ENCODE measurements at regions of chr5 and their contacts with region 1.

Region 1: GRCh38 chr5:54844905-54845566 is 140.4 kb downstream of the ESM1 start:
- DNase-seq: peak; percentile 76
- ATAC-seq: peak; percentile 54
- H3K4me3 ChIP-seq: peak overlapping the region in 3 of 5 experiments; percentile 26 to 41 (median 28)
- H3K4me3 Mint-ChIP-seq: peak overlapping the region; percentile 85
- H3K27ac ChIP-seq: peak overlapping the region in 1 of 2 donors; percentile 70
- H3K27ac Mint-ChIP-seq: peak overlapping the region; percentile 91
- H3K4me1 ChIP-seq: peaks cover 5 to 10% of the 10 kb centered on the region in 2 donors
- H3K4me1 Mint-ChIP-seq: peaks cover 23% of the 10 kb centered on the region
- H3K27me3 ChIP-seq: no peaks in the 10 kb centered on the region
- H3K27me3 Mint-ChIP-seq: peaks cover 16% of the 10 kb centered on the region
- CTCF ChIP-seq: peak; percentile 78

Region 2: DNA sequence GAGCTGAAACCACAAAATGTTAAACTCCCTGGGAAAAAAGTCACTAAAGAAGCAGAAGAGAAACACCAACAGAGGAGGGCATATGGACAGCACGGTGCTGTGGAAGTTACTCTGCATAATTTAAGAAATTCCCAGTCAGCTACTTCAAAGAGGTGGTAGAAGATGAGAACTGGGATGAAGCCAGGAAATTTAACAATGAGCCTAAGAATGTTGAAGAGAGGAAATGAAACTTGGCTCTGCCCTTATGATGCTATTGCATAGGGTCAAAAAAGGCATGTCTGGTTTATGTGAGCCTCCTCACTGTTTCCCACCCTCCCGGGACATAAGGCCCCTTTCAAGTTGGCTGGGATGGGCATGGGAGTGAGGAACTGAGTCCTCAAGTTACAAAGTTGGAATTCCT is 352.9 kb before region 1 on chr5:
- CTCF ChIA-PET with region 1: interaction called, 19 read pairs
- POLR2A ChIA-PET with region 1: interaction called, 4 read pairs
- intact Hi-C with region 1: no loop called
- DNase-seq: no peak
- ATAC-seq: no peak
- H3K4me3 ChIP-seq: no peak overlapping the region
- H3K4me3 Mint-ChIP-seq: no peak overlapping the region
- H3K27ac ChIP-seq: no peak overlapping the region
- H3K27ac Mint-ChIP-seq: no peak overlapping the region
- H3K4me1 ChIP-seq: no peaks in the 10 kb centered on the region
- H3K4me1 Mint-ChIP-seq: no peaks in the 10 kb centered on the region
- H3K27me3 ChIP-seq: peaks cover 0 to 5% (median 1%) of the 10 kb centered on the region in 4 experiments
- H3K27me3 Mint-ChIP-seq: peaks cover 8% of the 10 kb centered on the region
- CTCF ChIP-seq: no peak

Region 3: DNA sequence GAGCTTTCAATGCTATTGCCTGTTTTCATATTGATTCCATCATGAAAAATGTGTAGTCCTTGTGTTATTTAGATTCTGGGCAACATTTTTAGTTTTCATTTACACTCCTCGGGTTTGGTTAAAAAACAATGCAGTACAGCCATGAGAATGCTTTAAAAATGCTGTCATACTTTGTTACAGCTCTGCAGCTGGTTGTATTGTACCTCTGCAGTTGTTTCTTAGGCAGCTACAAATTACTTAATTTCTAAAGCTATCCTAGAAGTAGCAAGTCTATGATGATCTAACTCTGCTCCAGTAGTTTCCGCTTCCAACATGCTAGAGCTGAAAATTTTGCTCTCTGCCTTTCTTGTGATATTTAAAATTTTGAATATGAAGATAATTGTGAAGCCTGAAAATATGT is 307.3 kb before region 1 on chr5:
- CTCF ChIA-PET with region 1: interaction called, 14 read pairs
- POLR2A ChIA-PET with region 1: no interaction called
- intact Hi-C with region 1: no loop called
- DNase-seq: no peak
- ATAC-seq: no peak
- H3K4me3 ChIP-seq: no peak overlapping the region
- H3K4me3 Mint-ChIP-seq: no peak overlapping the region
- H3K27ac ChIP-seq: peak overlapping the region in 1 of 2 donors; percentile 56
- H3K27ac Mint-ChIP-seq: no peak overlapping the region
- H3K4me1 ChIP-seq: peaks cover 12 to 44% of the 10 kb centered on the region in 2 donors
- H3K4me1 Mint-ChIP-seq: peaks cover 74% of the 10 kb centered on the region
- H3K27me3 ChIP-seq: no peaks in the 10 kb centered on the region
- H3K27me3 Mint-ChIP-seq: no peaks in the 10 kb centered on the region
- CTCF ChIP-seq: no peak

Region 4: DNA sequence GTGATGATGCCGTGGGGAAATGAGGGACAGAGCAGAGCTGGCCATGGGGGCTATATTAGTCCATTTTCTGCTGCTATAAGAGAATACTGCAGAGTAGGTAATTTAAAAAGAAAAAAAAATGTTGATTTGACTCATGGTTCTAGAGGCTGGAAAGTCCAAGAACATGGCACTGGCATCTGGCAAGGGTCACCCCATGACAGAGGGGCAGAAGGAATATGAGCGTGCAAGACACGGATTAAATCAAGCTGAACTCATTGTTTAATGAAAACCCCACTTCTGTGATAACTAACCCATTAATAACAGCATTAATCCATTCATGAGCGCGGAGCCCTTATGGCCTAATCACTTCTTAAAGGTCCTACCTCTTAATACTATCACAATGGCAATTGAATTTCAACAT is 258.7 kb before region 1 on chr5:
- CTCF ChIA-PET with region 1: no interaction called
- POLR2A ChIA-PET with region 1: no interaction called
- intact Hi-C with region 1: no loop called
- DNase-seq: no peak
- ATAC-seq: no peak
- H3K4me3 ChIP-seq: no peak overlapping the region
- H3K4me3 Mint-ChIP-seq: no peak overlapping the region
- H3K27ac ChIP-seq: no peak overlapping the region
- H3K27ac Mint-ChIP-seq: no peak overlapping the region
- H3K4me1 ChIP-seq: peaks cover 8 to 11% of the 10 kb centered on the region in 2 donors
- H3K4me1 Mint-ChIP-seq: peaks cover 18% of the 10 kb centered on the region
- H3K27me3 ChIP-seq: no peaks in the 10 kb centered on the region
- H3K27me3 Mint-ChIP-seq: no peaks in the 10 kb centered on the region
- CTCF ChIP-seq: no peak

Region 5: DNA sequence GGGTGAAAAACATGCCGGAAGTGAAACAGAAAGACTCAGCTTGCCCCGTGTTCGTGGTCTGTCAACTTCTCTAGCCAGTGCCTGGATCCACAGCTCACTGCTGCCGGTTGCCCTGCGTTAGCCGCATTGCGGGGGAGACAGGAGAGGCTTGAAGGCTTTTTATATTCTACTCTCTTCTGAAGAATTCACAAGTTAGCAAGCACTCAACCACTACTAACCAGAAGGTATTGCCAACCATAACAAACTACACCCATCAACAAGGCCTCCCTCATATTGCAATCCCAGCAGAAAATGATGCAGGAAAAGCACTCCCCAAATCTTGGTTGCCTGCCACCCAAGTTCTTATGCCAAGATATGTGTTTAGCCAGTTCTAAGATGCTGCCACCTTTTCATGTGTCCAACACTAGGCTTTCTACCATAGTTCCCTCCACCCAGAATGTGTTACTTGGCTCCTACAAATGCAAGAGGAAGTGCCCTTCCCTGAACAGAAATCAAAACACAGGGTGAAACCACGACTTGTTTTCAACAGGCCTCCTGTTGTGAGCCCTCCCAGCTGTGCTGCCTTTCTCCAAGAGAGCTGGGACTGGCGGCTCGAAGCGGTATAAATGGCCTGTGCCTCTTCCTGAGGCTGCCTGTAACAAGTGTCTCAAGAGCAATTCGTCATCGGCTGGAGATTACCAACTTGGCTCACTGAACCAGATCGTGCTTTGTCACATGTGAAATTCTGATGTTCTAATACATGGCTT is 198.5 kb before region 1 on chr5:
- CTCF ChIA-PET with region 1: interaction called, 23 read pairs
- POLR2A ChIA-PET with region 1: interaction called, 4 read pairs
- intact Hi-C with region 1: loop called (anchors 1 kb)
- DNase-seq: peak; percentile 88
- ATAC-seq: peak; percentile 89
- H3K4me3 ChIP-seq: peak overlapping the region; percentile 7 to 49 (median 41)
- H3K4me3 Mint-ChIP-seq: peak overlapping the region; percentile 79
- H3K27ac ChIP-seq: peak overlapping the region; percentile 87 to 88
- H3K27ac Mint-ChIP-seq: peak overlapping the region; percentile 98
- H3K4me1 ChIP-seq: peaks cover 61 to 67% of the 10 kb centered on the region in 2 donors
- H3K4me1 Mint-ChIP-seq: peaks cover 68% of the 10 kb centered on the region
- H3K27me3 ChIP-seq: no peaks in the 10 kb centered on the region
- H3K27me3 Mint-ChIP-seq: no peaks in the 10 kb centered on the region
- CTCF ChIP-seq: no peak

Region 6: GRCh38 chr5:54753034-54753433 is 92.0 kb before region 1 on chr5:
- CTCF ChIA-PET with region 1: interaction called, 11 read pairs
- POLR2A ChIA-PET with region 1: no interaction called
- intact Hi-C with region 1: no loop called
- DNase-seq: peak; percentile 47
- ATAC-seq: peak; percentile 84
- H3K4me3 ChIP-seq: peak overlapping the region in 4 of 5 experiments; percentile 5 to 54 (median 21)
- H3K4me3 Mint-ChIP-seq: peak overlapping the region; percentile 55
- H3K27ac ChIP-seq: peak overlapping the region; percentile 67 to 75
- H3K27ac Mint-ChIP-seq: peak overlapping the region; percentile 87
- H3K4me1 ChIP-seq: peaks cover 48 to 57% of the 10 kb centered on the region in 2 donors
- H3K4me1 Mint-ChIP-seq: peaks cover 61% of the 10 kb centered on the region
- H3K27me3 ChIP-seq: no peaks in the 10 kb centered on the region
- H3K27me3 Mint-ChIP-seq: no peaks in the 10 kb centered on the region
- CTCF ChIP-seq: no peak

Region 7: GRCh38 chr5:54820346-54821134 is 24.5 kb before region 1 on chr5:
- CTCF ChIA-PET with region 1: no interaction called
- POLR2A ChIA-PET with region 1: no interaction called
- intact Hi-C with region 1: no loop called
- DNase-seq: no peak
- ATAC-seq: no peak
- H3K4me3 ChIP-seq: no peak overlapping the region
- H3K4me3 Mint-ChIP-seq: no peak overlapping the region
- H3K27ac ChIP-seq: no peak overlapping the region
- H3K27ac Mint-ChIP-seq: no peak overlapping the region
- H3K4me1 ChIP-seq: no peaks in the 10 kb centered on the region
- H3K4me1 Mint-ChIP-seq: no peaks in the 10 kb centered on the region
- H3K27me3 ChIP-seq: no peaks in the 10 kb centered on the region
- H3K27me3 Mint-ChIP-seq: no peaks in the 10 kb centered on the region
- CTCF ChIP-seq: no peak